CD4-positive, alpha-beta memory T cell (primary cell): ENCODE measurements at regions of chr6 and their contacts with region 1.

Region 1: DNA sequence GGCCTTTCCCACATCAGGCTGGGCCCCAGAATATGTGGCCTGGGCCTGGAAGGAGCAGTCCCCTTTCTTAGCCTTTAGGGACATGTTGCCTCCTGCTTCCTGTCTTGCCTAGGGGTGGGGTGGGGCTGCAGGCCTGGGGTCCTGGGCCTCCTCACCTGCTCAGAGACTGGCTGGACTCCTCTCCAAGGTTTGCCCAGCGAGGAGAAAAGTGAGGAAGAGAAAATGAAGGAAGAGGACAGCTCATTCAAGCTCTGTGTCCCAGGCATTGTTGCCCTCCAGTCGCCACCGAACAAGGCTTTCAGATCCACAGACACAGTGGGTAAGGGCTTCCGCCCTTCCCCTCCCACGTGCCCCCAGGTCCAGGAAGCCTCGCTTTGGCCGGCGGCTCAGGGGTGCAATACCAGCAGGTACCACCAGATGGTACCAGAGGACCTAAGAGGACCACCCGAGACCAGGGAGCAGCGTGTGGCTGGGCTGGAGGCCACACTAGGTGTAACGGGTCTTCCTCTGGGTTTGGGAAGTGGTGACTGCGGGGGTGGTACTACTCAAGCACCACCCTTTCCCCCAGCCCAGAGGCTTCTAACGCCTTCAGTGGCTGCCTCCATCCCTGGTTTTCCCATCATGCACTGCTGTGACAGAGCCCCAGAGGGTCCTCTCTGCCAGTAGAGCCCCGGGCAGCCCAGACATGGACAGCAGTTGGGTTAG is 5.5 kb upstream of the BAK1 start:
- DNase-seq: peak; percentile 78 to 89 (median 83)
- H3K4me3 ChIP-seq: no peak overlapping the region
- H3K4me3 Mint-ChIP-seq: peak overlapping the region in 7 of 8 donors; percentile 28 to 66 (median 59)
- H3K27ac ChIP-seq: peak overlapping the region; percentile 47
- H3K27ac Mint-ChIP-seq: peak overlapping the region; percentile 85 to 93 (median 89)
- H3K4me1 ChIP-seq: peaks cover 18% of the 10 kb centered on the region
- H3K4me1 Mint-ChIP-seq: peaks cover 8 to 34% (median 17%) of the 10 kb centered on the region in 4 donors
- H3K27me3 ChIP-seq: no peaks in the 10 kb centered on the region
- H3K27me3 Mint-ChIP-seq: no peaks in the 10 kb centered on the region

Region 2: GRCh38 chr6:33445119-33445603 is 140.4 kb before region 1 on chr6:
- CTCF ChIA-PET with region 1: no interaction called
- POLR2A ChIA-PET with region 1: no interaction called
- intact Hi-C with region 1: no loop called
- DNase-seq: no peak
- H3K4me3 ChIP-seq: no peak overlapping the region
- H3K4me3 Mint-ChIP-seq: no peak overlapping the region
- H3K27ac ChIP-seq: no peak overlapping the region
- H3K27ac Mint-ChIP-seq: peak overlapping the region in 5 of 7 donors; percentile 37 to 87 (median 68)
- H3K4me1 ChIP-seq: no peaks in the 10 kb centered on the region
- H3K4me1 Mint-ChIP-seq: peaks cover 1 to 7% (median 3%) of the 10 kb centered on the region in 4 donors
- H3K27me3 ChIP-seq: no peaks in the 10 kb centered on the region
- H3K27me3 Mint-ChIP-seq: no peaks in the 10 kb centered on the region

Region 3: GRCh38 chr6:33607784-33608161 is 22.2 kb after region 1 on chr6:
- CTCF ChIA-PET with region 1: interaction called, 46 read pairs
- POLR2A ChIA-PET with region 1: interaction called, 5 read pairs
- intact Hi-C with region 1: no loop called
- DNase-seq: peak in 4 of 5 donors; percentile 27 to 40 (median 32)
- H3K4me3 ChIP-seq: no peak overlapping the region
- H3K4me3 Mint-ChIP-seq: no peak overlapping the region
- H3K27ac ChIP-seq: no peak overlapping the region
- H3K27ac Mint-ChIP-seq: no peak overlapping the region
- H3K4me1 ChIP-seq: no peaks in the 10 kb centered on the region
- H3K4me1 Mint-ChIP-seq: no peaks in the 10 kb centered on the region
- H3K27me3 ChIP-seq: no peaks in the 10 kb centered on the region
- H3K27me3 Mint-ChIP-seq: no peaks in the 10 kb centered on the region

Region 4: GRCh38 chr6:33633462-33634158 is 48.1 kb after region 1 on chr6:
- CTCF ChIA-PET with region 1: interaction called, 10 read pairs
- POLR2A ChIA-PET with region 1: interaction called, 4 read pairs
- intact Hi-C with region 1: loop called (anchors 1 kb)
- DNase-seq: peak; percentile 50 to 57 (median 55)
- H3K4me3 ChIP-seq: peak overlapping the region in 1 of 2 donors; percentile 40
- H3K4me3 Mint-ChIP-seq: peak overlapping the region; percentile 85 to 94 (median 87)
- H3K27ac ChIP-seq: peak overlapping the region; percentile 35
- H3K27ac Mint-ChIP-seq: peak overlapping the region; percentile 84 to 93 (median 90)
- H3K4me1 ChIP-seq: peaks cover 39% of the 10 kb centered on the region
- H3K4me1 Mint-ChIP-seq: peaks cover 40 to 80% (median 58%) of the 10 kb centered on the region in 4 donors
- H3K27me3 ChIP-seq: no peaks in the 10 kb centered on the region
- H3K27me3 Mint-ChIP-seq: no peaks in the 10 kb centered on the region

Region 5: GRCh38 chr6:33700391-33701050 is 115.0 kb after region 1 on chr6:
- CTCF ChIA-PET with region 1: interaction called, 77 read pairs
- POLR2A ChIA-PET with region 1: interaction called, 8 read pairs
- intact Hi-C with region 1: loop called (anchors 1 kb)
- DNase-seq: peak; percentile 69 to 77 (median 71)
- H3K4me3 ChIP-seq: no peak overlapping the region
- H3K4me3 Mint-ChIP-seq: peak overlapping the region in 1 of 8 donors; percentile 53
- H3K27ac ChIP-seq: peak overlapping the region; percentile 12
- H3K27ac Mint-ChIP-seq: peak overlapping the region; percentile 35 to 93 (median 90)
- H3K4me1 ChIP-seq: peaks cover 32% of the 10 kb centered on the region
- H3K4me1 Mint-ChIP-seq: peaks cover 21 to 49% (median 33%) of the 10 kb centered on the region in 4 donors
- H3K27me3 ChIP-seq: no peaks in the 10 kb centered on the region
- H3K27me3 Mint-ChIP-seq: no peaks in the 10 kb centered on the region

Region 6: GRCh38 chr6:33761922-33762629 is 176.5 kb after region 1 on chr6:
- CTCF ChIA-PET with region 1: no interaction called
- POLR2A ChIA-PET with region 1: no interaction called
- intact Hi-C with region 1: loop called (anchors 1 kb)
- DNase-seq: peak in 1 of 5 donors; percentile 21
- H3K4me3 ChIP-seq: no peak overlapping the region
- H3K4me3 Mint-ChIP-seq: no peak overlapping the region
- H3K27ac ChIP-seq: no peak overlapping the region
- H3K27ac Mint-ChIP-seq: peak overlapping the region in 1 of 7 donors; percentile 24
- H3K4me1 ChIP-seq: no peaks in the 10 kb centered on the region
- H3K4me1 Mint-ChIP-seq: peaks cover 0 to 1% (median under 1%) of the 10 kb centered on the region in 4 donors
- H3K27me3 ChIP-seq: no peaks in the 10 kb centered on the region
- H3K27me3 Mint-ChIP-seq: peaks cover 3 to 7% of the 10 kb centered on the region in 2 donors